ENCODE measurements at regions of chr5 and their contacts with region 1.

Region 1: DNA sequence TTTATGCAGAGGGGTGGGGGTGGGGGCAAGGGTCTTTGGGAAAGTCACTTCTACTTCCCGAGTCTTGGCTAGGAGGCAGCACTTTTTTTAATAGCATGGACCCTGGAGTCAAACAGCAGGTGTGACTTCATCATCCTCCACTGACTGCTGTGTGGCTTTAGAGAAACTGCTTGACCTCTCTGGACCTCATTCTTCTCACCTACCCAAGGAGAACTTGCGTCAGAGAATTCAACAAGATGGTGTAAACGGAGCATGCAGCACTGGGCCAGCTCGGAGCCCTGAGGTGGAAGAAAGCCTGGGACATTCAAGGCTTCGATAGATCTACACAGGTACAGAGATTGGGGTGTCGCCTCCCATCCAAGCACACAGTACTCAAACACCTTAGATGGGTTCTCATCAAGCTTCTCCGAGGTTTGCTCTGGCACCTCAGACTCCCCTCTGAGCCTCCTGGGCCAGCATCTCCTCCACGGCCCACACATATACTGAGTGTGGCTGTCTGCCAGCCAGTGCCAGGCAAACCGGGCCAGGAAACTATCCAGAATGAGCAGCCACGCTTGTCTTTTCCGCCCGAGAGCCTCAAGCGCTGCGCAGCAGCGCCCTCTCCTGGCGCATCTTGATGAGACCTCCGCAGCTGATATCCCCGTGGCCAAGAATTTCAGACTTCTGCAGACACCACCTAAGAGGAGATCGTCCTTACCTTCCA is 4.6 kb upstream of the SLC25A48 start:
- DNase-seq: peak; percentile 79
- ATAC-seq: peak; percentile 48

Region 2: DNA sequence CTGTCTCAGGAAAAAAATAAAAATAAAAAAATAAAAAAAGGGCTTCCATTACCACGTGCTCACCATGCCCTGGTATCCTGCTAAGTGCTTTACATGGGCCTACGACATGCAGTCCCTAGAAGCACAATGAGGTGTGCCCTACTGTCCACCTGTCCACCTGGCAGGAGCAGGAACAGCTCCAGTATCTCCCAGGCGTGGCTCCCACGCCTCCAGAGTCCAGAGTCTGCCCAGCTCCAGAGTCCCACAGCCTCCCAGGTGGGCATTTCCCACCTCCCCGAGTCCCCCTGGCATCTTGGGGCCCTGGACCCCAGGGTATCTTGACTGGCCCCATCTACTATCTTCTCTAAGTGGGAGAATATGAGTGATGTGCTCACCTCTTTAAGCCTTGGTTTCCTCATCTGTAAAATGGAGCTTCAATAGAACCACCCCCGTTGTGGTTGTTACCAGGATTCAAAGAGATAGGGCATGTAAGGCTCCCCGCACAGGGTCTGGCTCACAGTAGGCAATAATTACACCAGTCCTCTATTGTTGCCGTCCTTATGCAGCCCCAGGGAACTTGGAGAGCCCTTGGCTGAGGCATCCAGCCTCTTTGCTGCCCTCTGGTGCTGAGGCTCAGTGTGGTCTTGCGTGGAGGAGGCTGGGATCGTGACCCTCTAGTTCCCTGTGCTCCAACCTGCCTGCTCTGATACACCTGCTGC is 259.9 kb before region 1 on chr5:
- intact Hi-C with region 1: loop called (anchors 10 kb)
- DNase-seq: no peak
- ATAC-seq: peak; percentile 33

Region 3: DNA sequence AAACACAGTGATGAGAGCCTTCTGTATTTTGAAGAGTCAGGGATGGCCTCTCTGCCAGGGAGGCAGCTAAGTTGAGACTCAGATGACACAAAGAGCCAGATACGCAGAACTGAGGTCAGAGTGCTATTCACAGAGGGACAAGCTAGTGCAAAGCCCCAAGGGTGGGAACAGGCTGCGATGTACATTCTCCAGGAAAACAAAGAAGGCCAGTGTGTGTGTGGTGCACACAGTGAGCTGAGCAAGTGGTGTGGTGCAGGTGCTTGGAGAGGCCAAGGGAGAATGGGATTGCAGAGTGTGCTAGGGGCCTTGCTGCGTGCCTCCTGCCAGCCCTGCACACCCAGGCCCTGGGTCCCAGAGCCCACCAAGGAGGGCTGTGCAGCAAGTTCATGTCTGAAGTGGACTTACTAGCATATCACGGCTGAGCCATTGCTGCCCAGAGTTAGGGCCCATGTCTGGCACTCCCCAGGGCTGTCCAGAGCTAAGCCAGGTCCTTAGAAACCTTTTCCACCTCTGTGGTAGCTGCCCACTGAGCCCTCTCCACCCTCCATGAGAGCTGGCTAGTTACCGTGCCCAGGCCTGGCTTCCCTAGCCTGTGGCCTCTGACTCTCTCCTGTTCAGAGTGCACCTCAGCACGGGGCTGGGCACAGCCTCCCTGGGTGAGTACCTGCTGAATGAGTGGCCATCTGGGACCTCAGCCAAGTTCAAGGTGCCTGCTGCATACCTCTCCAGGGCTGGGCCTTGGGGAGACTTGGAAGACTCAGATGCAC is 13.9 kb after region 1 on chr5:
- intact Hi-C with region 1: no loop called
- DNase-seq: no peak
- ATAC-seq: peak; percentile 73

Region 4: DNA sequence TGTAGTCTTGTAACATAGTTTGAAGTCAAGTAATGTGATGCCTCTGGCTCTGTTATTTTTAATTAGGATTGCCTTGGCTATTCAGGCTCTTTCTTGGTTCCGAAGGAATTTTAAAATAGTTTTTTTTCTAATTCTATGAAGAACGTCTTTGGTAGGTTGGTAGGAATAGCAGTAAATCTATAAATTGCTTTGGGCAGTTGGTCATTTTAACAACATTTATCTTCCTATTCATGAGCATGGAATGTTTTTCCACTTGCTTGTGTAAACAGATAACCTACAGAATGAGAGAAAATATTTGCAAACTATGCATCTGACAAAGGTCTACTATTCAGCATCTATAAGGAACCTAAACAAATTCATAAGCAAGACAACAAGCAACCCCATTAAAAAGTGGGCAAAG is 708.7 kb after region 1 on chr5:
- intact Hi-C with region 1: no loop called
- DNase-seq: no peak
- ATAC-seq: no peak

Measured in sciatic nerve (tissue), 2 donors.